ENCODE measurements at regions of chr20 and their contacts with region 1.

Region 1: DNA sequence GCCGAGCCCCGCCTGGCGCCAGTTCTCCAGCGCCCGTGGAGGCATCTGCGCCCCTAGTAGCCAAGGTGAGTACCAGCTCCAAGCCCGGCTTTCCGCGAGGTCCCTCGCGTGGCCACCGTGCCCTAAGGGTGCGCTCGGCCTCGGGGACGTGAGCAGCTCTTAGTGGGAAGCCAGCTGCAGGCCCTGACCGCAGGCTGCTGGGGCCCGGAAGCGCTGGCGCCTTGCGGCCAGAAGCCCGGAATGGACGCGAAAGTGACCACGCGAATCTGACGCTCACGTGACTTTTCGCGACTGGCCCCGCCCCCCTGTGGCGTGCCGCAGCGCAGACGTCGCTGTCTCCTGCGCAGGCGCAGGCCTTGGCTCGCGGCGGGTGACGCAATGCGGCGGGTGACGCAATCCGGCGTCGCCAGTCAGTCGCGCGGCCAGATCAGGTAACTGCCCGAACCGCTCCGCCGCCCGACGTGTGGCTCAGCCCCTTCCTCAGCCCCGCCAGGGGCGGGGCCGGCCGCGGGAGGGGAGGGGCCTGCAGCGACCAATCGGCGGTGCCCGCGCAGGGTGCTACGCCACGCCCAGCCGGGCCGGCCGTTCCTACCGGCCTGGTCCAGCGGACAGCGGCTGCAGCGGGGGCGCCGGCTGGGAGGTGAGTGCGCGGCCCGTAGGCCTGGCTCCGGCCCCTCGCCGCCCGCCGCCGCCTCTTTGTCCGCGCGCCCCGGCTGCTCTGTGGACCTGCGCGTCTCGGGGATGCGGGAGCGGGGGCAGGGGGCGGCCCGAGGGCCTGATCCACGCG is at the start of gene GZF1:
- DNase-seq: peak; percentile 99
- ATAC-seq: peak; percentile 95
- total RNA-seq, gene GZF1: 20.6 TPM

Region 2: DNA sequence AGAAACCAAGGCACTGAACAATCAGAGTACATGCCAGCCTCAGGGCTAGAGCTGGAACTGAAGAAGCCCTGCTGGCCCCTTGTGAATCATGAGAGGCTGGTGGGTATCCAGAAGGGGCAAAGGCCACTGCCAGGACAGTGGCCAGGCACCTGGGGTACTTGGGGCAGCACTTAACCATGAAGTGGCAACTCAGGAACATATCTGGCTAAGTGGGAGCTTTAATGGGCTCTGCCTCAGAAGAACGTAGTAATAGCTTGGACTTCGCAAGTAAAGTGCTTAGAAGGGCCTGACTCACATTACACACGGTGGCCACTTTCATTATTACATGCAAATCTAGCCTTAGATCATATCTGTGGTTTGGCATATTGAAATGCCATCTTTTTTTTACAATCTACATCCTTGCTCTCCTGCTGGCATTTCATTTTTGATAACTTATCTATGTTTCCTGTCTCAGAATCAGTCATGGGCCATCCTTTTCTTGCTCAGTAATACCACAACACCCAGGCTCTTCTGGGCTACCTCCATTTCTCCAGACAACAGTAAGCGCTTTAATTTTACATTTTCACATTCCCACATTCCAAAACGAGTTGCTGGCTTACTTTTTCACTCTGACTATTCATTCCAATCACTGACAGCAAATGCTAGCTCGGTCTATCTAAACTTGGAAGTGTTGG is 37.9 kb after region 1 on chr20:
- intact Hi-C with region 1: loop called (anchors 5 kb)
- DNase-seq: no peak
- ATAC-seq: no peak

Region 3: GRCh38 chr20:23420943-23421931 is 59.4 kb after region 1 on chr20 and contains the start of gene NAPB:
- intact Hi-C with region 1: loop called (anchors 5 kb)
- DNase-seq: peak; percentile 99
- ATAC-seq: peak; percentile 99
- total RNA-seq, gene NAPB: 4.7 TPM

Region 4: GRCh38 chr20:23637282-23638221 is 275.8 kb after region 1 on chr20 and contains the start of gene CST3:
- intact Hi-C with region 1: loop called (anchors 5 kb)
- DNase-seq: peak; percentile 95
- ATAC-seq: peak; percentile 86
- total RNA-seq, gene CST3: 1,033 TPM